Thyroid gland (tissue), 4 donors: ENCODE measurements at regions of chr1 and their contacts with region 1.

Region 1: GRCh38 chr1:25037174-25038074 is 107.3 kb upstream of the RUNX3 start:
- DNase-seq: no peak
- H3K4me3 ChIP-seq: no peak overlapping the region
- H3K27ac ChIP-seq: no peak overlapping the region
- H3K4me1 ChIP-seq: no peaks in the 10 kb centered on the region
- H3K27me3 ChIP-seq: no peaks in the 10 kb centered on the region
- CTCF ChIP-seq: peak in 3 of 6 experiments; percentile 7 to 32 (median 28)
- POLR2A ChIP-seq: no peak

Region 2: GRCh38 chr1:23979878-23980724 is 1057.3 kb before region 1 on chr1 and contains the start of gene SRSF10:
- intact Hi-C with region 1: no loop called
- DNase-seq: peak; percentile 97
- H3K4me3 ChIP-seq: peak within 1 kb of the TSS; percentile 70 to 94 (median 91)
- H3K27ac ChIP-seq: peak within 1 kb of the TSS; percentile 95 to 99 (median 98)
- H3K4me1 ChIP-seq: peaks cover 44 to 70% of the 10 kb centered on the region in 2 donors
- H3K27me3 ChIP-seq: no peaks in the 10 kb centered on the region
- CTCF ChIP-seq: peak in 4 of 6 experiments; percentile 18 to 35 (median 24)
- POLR2A ChIP-seq: peak; percentile 97 to 98
- total RNA-seq, gene SRSF10: 158 to 193 (median 172) TPM

Region 3: DNA sequence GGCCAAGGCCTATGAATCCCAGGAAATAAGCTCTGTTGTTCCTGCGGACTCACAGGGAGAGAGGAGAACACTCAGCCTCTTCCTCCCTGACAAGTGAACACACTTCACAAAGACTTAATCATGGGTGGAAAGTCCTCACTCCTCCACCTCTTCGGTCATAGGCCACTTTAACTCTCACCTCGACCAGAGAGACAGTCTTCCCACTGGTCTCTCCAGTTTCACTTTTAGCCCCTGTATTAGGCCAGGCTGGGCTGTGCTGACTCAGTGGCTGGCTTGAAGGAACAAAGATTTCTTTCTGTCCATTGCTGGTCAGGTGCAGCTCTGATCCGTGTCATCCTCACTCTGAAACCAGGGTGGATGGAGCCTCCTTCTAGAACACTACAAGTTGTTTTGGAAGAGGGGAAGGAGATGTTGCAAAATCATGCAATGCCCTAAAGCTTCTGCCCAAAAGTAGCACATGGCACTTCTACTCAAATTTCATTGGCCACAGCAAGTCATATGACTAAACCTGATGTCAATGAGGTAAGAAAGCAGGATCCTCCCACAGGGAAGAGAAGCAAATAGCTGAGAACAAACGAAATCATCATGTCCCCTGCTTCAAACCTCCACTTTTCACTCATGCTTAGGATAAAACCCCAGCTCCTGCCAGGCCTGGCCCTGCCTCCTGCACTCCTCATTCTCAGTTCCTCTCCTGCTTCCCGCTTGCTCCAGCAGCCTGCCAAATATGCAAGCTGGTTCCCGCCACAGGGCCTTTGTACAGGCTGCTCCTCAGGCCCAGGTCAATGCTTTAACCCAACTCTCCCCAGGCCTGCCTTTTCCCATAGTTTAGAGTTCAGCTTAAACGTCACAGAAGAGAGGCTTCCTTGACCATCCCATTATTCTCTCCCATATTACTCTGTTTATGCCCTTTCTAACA is 43.1 kb after region 1 on chr1:
- intact Hi-C with region 1: no loop called
- DNase-seq: no peak
- H3K4me3 ChIP-seq: no peak overlapping the region
- H3K27ac ChIP-seq: no peak overlapping the region
- H3K4me1 ChIP-seq: no peaks in the 10 kb centered on the region
- H3K27me3 ChIP-seq: no peaks in the 10 kb centered on the region
- CTCF ChIP-seq: no peak
- POLR2A ChIP-seq: no peak

Region 4: GRCh38 chr1:25198663-25199252 is 161.3 kb after region 1 on chr1:
- intact Hi-C with region 1: loop called (anchors 10 kb)
- DNase-seq: peak; percentile 11 to 49
- H3K4me3 ChIP-seq: no peak overlapping the region
- H3K27ac ChIP-seq: no peak overlapping the region
- H3K4me1 ChIP-seq: peaks cover 7 to 13% of the 10 kb centered on the region in 2 donors
- H3K27me3 ChIP-seq: no peaks in the 10 kb centered on the region
- CTCF ChIP-seq: peak in 1 of 6 experiments; percentile 15
- POLR2A ChIP-seq: no peak